B cell (primary cell): ENCODE measurements at regions of chr12 and their contacts with region 1.

Region 1: GRCh38 chr12:116703214-116703795 is 34.6 kb downstream of the SPRING1 start:
- DNase-seq: peak; percentile 74
- ATAC-seq: peak; percentile 81
- H3K4me3 ChIP-seq: no peak overlapping the region
- H3K4me3 Mint-ChIP-seq: no peak overlapping the region
- H3K27ac ChIP-seq: no peak overlapping the region
- H3K27ac Mint-ChIP-seq: no peak overlapping the region
- H3K4me1 ChIP-seq: peaks cover 9 to 11% of the 10 kb centered on the region in 2 donors
- H3K4me1 Mint-ChIP-seq: peaks cover 12% of the 10 kb centered on the region
- H3K27me3 ChIP-seq: peaks cover 0 to 3% (median 0%) of the 10 kb centered on the region in 4 experiments
- H3K27me3 Mint-ChIP-seq: peaks cover 8% of the 10 kb centered on the region
- CTCF ChIP-seq: peak; percentile 98

Region 2: GRCh38 chr12:116955382-116956021 is 252.2 kb after region 1 on chr12:
- CTCF ChIA-PET with region 1: interaction called, 10 read pairs
- POLR2A ChIA-PET with region 1: no interaction called
- intact Hi-C with region 1: loop called (anchors 1 kb)
- DNase-seq: peak; percentile 13
- ATAC-seq: no peak
- H3K4me3 ChIP-seq: no peak overlapping the region
- H3K4me3 Mint-ChIP-seq: no peak overlapping the region
- H3K27ac ChIP-seq: no peak overlapping the region
- H3K27ac Mint-ChIP-seq: no peak overlapping the region
- H3K4me1 ChIP-seq: no peaks in the 10 kb centered on the region
- H3K4me1 Mint-ChIP-seq: peaks cover 4% of the 10 kb centered on the region
- H3K27me3 ChIP-seq: no peaks in the 10 kb centered on the region
- H3K27me3 Mint-ChIP-seq: no peaks in the 10 kb centered on the region
- CTCF ChIP-seq: no peak